ENCODE measurements at regions of chr14 and their contacts with region 1.

Region 1: DNA sequence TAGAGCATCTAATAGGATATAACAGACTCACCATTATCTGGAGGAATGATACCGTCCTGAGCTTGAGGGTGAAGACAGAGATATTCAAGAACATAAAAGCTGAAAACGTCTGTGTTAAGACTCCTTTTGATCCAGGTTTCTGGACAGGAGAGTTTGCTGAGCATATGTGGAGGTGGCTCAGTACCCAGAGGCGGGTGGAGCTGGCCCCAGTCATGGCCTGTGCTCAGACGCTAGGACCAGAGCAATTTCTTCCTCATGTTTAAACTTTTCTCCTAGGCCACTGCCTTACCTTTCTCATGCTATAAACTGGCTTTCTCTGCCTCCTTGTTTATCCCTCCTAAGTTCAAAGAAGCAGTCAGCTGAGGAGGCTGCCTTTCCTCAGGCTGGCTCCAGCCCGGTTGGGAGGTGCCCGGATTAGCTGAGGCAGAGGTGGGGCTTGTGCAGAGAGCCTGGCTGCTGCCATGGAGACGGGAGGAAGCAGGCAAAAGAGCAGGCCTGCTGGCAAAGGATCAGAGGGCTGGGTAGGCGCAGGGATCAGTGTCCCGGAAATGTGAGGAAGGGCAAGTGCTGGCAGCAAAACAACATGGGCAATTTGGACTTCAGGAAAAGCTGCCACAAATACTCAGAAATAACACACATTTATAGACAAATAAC is 13.7 kb downstream of the COA8 start:
- DNase-seq: no peak
- ATAC-seq: no peak
- H3K4me3 ChIP-seq: no peak overlapping the region
- H3K27ac ChIP-seq: no peak overlapping the region
- H3K4me1 ChIP-seq: no peaks in the 10 kb centered on the region
- H3K27me3 ChIP-seq: no peaks in the 10 kb centered on the region
- CTCF ChIP-seq: no peak
- EP300 ChIP-seq: no peak
- POLR2A ChIP-seq: no peak
- RAD21 ChIP-seq: no peak

Region 2: GRCh38 chr14:103401223-103402214 is 175.0 kb before region 1 on chr14:
- CTCF ChIA-PET with region 1: no interaction called
- POLR2A ChIA-PET with region 1: no interaction called
- in situ Hi-C with region 1: no loop called
- intact Hi-C with region 1: no loop called
- DNase-seq: peak in 1 of 4 experiments; percentile 49
- ATAC-seq: peak; percentile 65
- H3K4me3 ChIP-seq: no peak overlapping the region
- H3K27ac ChIP-seq: peak overlapping the region; percentile 64
- H3K4me1 ChIP-seq: peaks cover 8 to 39% of the 10 kb centered on the region in 2 experiments
- H3K27me3 ChIP-seq: no peaks in the 10 kb centered on the region
- CTCF ChIP-seq: no peak
- EP300 ChIP-seq: no peak
- POLR2A ChIP-seq: no peak
- RAD21 ChIP-seq: no peak

Region 3: GRCh38 chr14:103679351-103679750 is 102.9 kb after region 1 on chr14:
- CTCF ChIA-PET with region 1: no interaction called
- POLR2A ChIA-PET with region 1: no interaction called
- in situ Hi-C with region 1: loop called (anchors 10 kb)
- intact Hi-C with region 1: loop called (anchors 10 kb)
- DNase-seq: peak in 1 of 4 experiments; percentile 26
- ATAC-seq: peak; percentile 82
- H3K4me3 ChIP-seq: no peak overlapping the region
- H3K27ac ChIP-seq: no peak overlapping the region
- H3K4me1 ChIP-seq: no peaks in the 10 kb centered on the region
- H3K27me3 ChIP-seq: no peaks in the 10 kb centered on the region
- CTCF ChIP-seq: peak; percentile 11 to 32 (median 32); a peak in 2 of 6 replicates
- EP300 ChIP-seq: no peak
- POLR2A ChIP-seq: no peak
- RAD21 ChIP-seq: peak in 1 of 2 experiments; percentile 15; a peak in 1 of 4 replicates

Region 4: DNA sequence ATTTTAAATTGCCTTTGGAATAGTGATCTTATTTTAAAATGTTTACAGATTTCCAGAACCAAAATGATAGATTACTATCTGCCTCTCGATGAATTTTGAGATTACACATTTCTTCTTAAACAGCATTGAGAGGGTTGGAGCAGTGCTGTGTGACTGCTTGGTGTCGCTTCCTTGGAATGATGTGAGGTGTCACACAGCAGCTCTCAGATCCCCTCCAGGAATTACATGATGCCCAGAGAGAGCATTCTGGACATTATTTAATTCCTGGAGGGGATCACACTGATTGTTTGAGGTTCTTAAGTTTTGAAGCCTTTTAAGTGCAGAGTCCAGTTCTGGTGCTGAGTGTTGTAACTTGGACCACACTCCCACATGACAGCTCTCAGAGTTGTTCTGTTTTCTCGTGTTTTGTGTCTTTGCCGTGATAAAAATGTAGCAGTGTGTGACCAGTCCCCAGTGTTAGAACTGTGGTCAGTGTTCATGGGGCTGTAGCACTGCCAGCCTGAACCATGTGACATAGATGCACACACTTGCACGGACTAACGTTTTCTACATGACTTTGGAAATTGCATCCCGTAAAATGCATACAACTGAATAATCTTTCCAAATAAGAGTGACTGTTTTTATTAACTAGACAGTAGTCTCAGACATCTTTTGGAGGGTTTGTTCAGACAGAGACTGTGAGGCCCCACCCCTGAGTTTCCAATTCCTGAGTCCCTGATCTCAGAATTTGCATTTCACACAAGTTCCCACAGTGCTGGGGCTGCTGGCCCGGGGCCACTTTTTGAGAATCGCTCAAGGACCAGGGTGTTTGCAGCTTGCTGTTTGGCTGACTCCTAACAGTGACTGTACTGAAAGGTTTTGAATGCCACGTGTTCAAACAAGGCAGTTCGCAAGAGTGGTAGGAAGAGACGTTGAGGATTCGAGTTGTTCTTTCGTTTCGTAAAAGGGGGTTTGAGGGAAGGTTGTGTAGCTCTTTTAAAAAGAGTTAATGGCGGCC is 112.7 kb after region 1 on chr14:
- CTCF ChIA-PET with region 1: no interaction called
- POLR2A ChIA-PET with region 1: no interaction called
- in situ Hi-C with region 1: no loop called
- intact Hi-C with region 1: loop called (anchors 10 kb)
- DNase-seq: no peak
- ATAC-seq: no peak
- H3K4me3 ChIP-seq: no peak overlapping the region
- H3K27ac ChIP-seq: no peak overlapping the region
- H3K4me1 ChIP-seq: peaks cover 0 to 3% of the 10 kb centered on the region in 2 experiments; a peak in 1 of 5 replicates
- H3K27me3 ChIP-seq: no peaks in the 10 kb centered on the region
- CTCF ChIP-seq: no peak
- EP300 ChIP-seq: no peak
- POLR2A ChIP-seq: no peak
- RAD21 ChIP-seq: no peak

Region 5: GRCh38 chr14:103748534-103748857 is 172.0 kb after region 1 on chr14:
- CTCF ChIA-PET with region 1: no interaction called
- POLR2A ChIA-PET with region 1: no interaction called
- in situ Hi-C with region 1: no loop called
- intact Hi-C with region 1: loop called (anchors 2 kb)
- DNase-seq: no peak
- ATAC-seq: peak; percentile 37; the same call in 2 of the 3 replicates
- H3K4me3 ChIP-seq: no peak overlapping the region
- H3K27ac ChIP-seq: no peak overlapping the region
- H3K4me1 ChIP-seq: no peaks in the 10 kb centered on the region; a peak in 3 of 5 replicates
- H3K27me3 ChIP-seq: peaks cover 2 to 10% of the 10 kb centered on the region in 2 experiments; a peak in 3 of 5 replicates
- CTCF ChIP-seq: no peak
- EP300 ChIP-seq: no peak
- POLR2A ChIP-seq: no peak
- RAD21 ChIP-seq: no peak

Measured in K562 (cell line).